IMR-90 (cell line): ENCODE measurements at regions of chr6 and their contacts with region 1.

Region 1: DNA sequence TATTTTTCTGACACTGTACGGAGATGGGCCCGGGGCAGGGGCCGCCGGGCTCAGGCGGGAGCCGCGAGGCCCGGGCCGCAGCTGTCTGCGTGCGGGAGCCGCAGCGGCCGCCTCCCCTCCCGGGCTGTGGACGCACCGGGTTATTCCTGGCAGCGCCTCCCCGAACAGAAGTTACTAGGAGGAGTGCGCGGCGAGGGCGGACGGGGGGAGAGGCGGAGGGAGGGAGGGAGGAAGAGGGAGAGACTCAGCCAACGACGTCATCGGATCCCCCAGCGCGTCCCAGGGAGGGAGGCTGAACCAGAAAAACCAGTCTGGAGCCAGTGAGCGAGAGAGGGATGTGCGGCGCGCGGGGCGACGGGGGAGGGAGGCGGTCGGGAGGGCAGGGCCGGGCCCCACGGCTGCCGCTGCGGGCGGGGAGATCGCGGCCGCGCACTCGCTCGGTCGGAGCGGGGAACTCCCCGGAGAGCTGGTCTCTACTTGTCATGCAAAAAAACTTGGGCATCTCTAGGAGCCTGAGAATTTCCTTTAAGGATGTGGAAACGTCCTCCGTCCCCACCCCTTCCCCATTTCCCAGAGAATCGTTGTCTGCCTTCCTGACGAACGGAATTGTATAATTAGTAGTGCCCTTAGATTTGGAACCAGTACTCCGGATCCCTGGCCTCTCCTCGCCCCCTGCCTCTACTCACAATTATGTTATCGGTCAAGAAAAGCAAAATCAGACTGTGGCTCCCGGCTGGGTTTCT is 1.4 kb upstream of the HIVEP2 start:
- DNase-seq: peak; percentile 98
- ATAC-seq: peak; percentile 75
- H3K4me3 ChIP-seq: peak overlapping the region; percentile 74
- H3K27ac ChIP-seq: peak overlapping the region; percentile 87
- H3K4me1 ChIP-seq: peaks cover 3% of the 10 kb centered on the region
- H3K27me3 ChIP-seq: no peaks in the 10 kb centered on the region
- CTCF ChIP-seq: no peak
- POLR2A ChIP-seq: peak; percentile 91
- RAD21 ChIP-seq: no peak; the same call in 1 of the 2 replicates

Region 2: DNA sequence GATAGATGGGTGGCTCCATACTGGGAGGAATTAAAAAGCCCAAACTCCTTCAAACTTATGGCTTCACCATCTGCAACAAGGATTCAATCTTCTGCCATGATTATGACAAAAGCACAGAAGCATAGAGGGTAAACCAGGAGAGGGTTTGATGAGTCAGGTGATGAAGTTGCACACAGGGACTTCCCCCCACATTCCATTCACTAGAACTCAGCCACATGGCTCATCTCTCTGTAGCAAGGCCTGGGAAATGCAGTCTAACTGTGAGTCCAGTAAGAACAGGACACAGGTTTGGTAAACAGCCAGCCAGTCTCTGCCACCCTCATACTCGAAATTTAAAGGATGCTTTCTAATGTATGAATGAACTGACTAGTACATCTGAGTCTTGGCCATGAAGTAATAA is 144.2 kb before region 1 on chr6:
- CTCF ChIA-PET with region 1: no interaction called
- POLR2A ChIA-PET with region 1: no interaction called
- dilution Hi-C with region 1: no loop called
- in situ Hi-C with region 1: no loop called
- intact Hi-C with region 1: loop called (anchors 5 kb)
- DNase-seq: peak; percentile 99
- ATAC-seq: peak; percentile 99
- H3K4me3 ChIP-seq: no peak overlapping the region
- H3K27ac ChIP-seq: no peak overlapping the region
- H3K4me1 ChIP-seq: peaks cover 3% of the 10 kb centered on the region; the same call in 1 of the 2 replicates
- H3K27me3 ChIP-seq: no peaks in the 10 kb centered on the region
- CTCF ChIP-seq: no peak
- POLR2A ChIP-seq: peak; percentile 55; the same call in 1 of the 2 replicates
- RAD21 ChIP-seq: peak; percentile 37

Region 3: GRCh38 chr6:142845624-142846458 is 100.5 kb before region 1 on chr6:
- CTCF ChIA-PET with region 1: no interaction called
- POLR2A ChIA-PET with region 1: no interaction called
- dilution Hi-C with region 1: no loop called
- in situ Hi-C with region 1: no loop called
- intact Hi-C with region 1: loop called (anchors 2 kb)
- DNase-seq: peak; percentile 70
- ATAC-seq: peak; percentile 53
- H3K4me3 ChIP-seq: peak overlapping the region; percentile 2; the same call in 1 of the 2 replicates
- H3K27ac ChIP-seq: peak overlapping the region; percentile 85
- H3K4me1 ChIP-seq: peaks cover 20% of the 10 kb centered on the region
- H3K27me3 ChIP-seq: no peaks in the 10 kb centered on the region
- CTCF ChIP-seq: no peak
- POLR2A ChIP-seq: peak; percentile 0; the same call in 1 of the 2 replicates
- RAD21 ChIP-seq: no peak

Region 4: GRCh38 chr6:143026696-143027449 is 80.5 kb after region 1 on chr6:
- CTCF ChIA-PET with region 1: no interaction called
- POLR2A ChIA-PET with region 1: no interaction called
- dilution Hi-C with region 1: no loop called
- in situ Hi-C with region 1: no loop called
- intact Hi-C with region 1: loop called (anchors 5 kb)
- DNase-seq: peak; percentile 24
- ATAC-seq: peak; percentile 61
- H3K4me3 ChIP-seq: no peak overlapping the region
- H3K27ac ChIP-seq: no peak overlapping the region
- H3K4me1 ChIP-seq: no peaks in the 10 kb centered on the region
- H3K27me3 ChIP-seq: no peaks in the 10 kb centered on the region
- CTCF ChIP-seq: peak; percentile 72
- POLR2A ChIP-seq: no peak
- RAD21 ChIP-seq: peak; percentile 80

Region 5: GRCh38 chr6:143098054-143098671 is 151.8 kb after region 1 on chr6:
- CTCF ChIA-PET with region 1: no interaction called
- POLR2A ChIA-PET with region 1: no interaction called
- dilution Hi-C with region 1: no loop called
- in situ Hi-C with region 1: no loop called
- intact Hi-C with region 1: no loop called
- DNase-seq: no peak
- ATAC-seq: no peak
- H3K4me3 ChIP-seq: no peak overlapping the region
- H3K27ac ChIP-seq: no peak overlapping the region
- H3K4me1 ChIP-seq: no peaks in the 10 kb centered on the region
- H3K27me3 ChIP-seq: no peaks in the 10 kb centered on the region
- CTCF ChIP-seq: no peak
- POLR2A ChIP-seq: no peak
- RAD21 ChIP-seq: no peak

Region 6: GRCh38 chr6:143427109-143427817 is 480.9 kb after region 1 on chr6:
- CTCF ChIA-PET with region 1: interaction called, 4 read pairs
- POLR2A ChIA-PET with region 1: no interaction called
- dilution Hi-C with region 1: no loop called
- in situ Hi-C with region 1: no loop called
- intact Hi-C with region 1: loop called (anchors 1 kb)
- DNase-seq: peak; percentile 86
- ATAC-seq: peak; percentile 100
- H3K4me3 ChIP-seq: no peak overlapping the region
- H3K27ac ChIP-seq: no peak overlapping the region
- H3K4me1 ChIP-seq: peaks cover 2% of the 10 kb centered on the region
- H3K27me3 ChIP-seq: no peaks in the 10 kb centered on the region
- CTCF ChIP-seq: peak; percentile 97
- POLR2A ChIP-seq: peak; percentile 51; the same call in 1 of the 2 replicates
- RAD21 ChIP-seq: peak; percentile 99

Region 7: DNA sequence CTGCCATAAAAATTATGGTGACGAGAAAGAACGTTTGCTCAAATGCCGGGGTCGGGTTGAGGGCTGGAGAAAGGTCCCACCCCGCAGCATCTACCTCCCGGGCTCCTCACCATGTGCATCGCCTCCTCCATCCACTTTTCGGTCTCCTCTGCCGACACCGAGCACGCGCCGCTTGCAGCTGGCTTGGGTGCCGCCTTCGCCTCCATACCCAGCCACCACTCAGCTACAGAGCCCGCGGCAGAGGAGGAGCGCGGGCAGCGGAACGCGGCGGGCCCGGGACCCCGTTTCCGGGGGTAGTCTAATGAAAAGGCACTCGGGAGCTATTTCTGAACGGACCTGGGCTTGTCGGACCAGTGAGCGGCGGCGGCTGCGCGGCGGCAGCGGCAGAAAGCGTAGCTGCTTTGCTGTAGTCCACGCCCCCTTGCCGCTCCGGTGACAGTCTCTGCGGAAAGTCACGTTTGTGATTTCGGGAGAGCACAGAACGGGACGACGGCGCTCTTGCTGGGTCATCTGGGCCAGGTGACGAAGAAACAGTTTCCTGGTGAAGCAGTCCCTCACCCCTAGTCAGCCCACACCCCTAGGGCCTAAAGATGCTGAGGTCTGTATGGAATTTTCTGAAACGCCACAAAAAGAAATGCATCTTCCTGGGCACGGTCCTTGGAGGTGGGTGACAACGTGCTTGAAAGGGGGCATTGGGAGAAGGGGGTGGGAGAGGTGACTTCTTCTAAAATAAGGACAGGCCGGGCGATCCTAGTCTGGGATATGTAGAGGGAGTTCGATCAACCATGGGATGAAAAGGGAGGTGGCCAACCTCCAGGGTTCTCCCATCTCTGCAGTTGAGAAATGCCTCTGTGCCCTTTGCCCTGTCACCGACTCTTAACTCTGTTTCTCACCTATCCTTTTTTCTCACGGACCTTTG is 504.4 kb after region 1 on chr6 and contains the starts of genes ADAT2 and PEX3:
- CTCF ChIA-PET with region 1: no interaction called
- POLR2A ChIA-PET with region 1: no interaction called
- dilution Hi-C with region 1: no loop called
- in situ Hi-C with region 1: no loop called
- intact Hi-C with region 1: no loop called
- DNase-seq: peak; percentile 92
- ATAC-seq: peak; percentile 99
- H3K4me3 ChIP-seq: peak within 1 kb of the TSS; percentile 75
- H3K27ac ChIP-seq: peak within 1 kb of the TSS; percentile 71
- H3K4me1 ChIP-seq: peaks cover 5% of the 10 kb centered on the region
- H3K27me3 ChIP-seq: no peaks in the 10 kb centered on the region
- CTCF ChIP-seq: no peak
- POLR2A ChIP-seq: peak; percentile 65; the same call in 1 of the 2 replicates
- RAD21 ChIP-seq: 0 out of 2 replicates have a peak, but pooled peaks have one; percentile 14
- total RNA-seq, gene ADAT2: 2.7 and 3.9 TPM in 2 replicates
- total RNA-seq, gene PEX3: 13.3 and 16.4 TPM in 2 replicates